ENCODE measurements at regions of chr12 and their contacts with region 1.

Region 1: GRCh38 chr12:78392918-78393317 is 471.7 kb upstream of the SYT1 start:
- H3K4me3 Mint-ChIP-seq: no peak overlapping the region
- H3K27ac Mint-ChIP-seq: no peak overlapping the region
- H3K4me1 Mint-ChIP-seq: peaks cover 6% of the 10 kb centered on the region
- H3K27me3 Mint-ChIP-seq: no peaks in the 10 kb centered on the region

Region 2: DNA sequence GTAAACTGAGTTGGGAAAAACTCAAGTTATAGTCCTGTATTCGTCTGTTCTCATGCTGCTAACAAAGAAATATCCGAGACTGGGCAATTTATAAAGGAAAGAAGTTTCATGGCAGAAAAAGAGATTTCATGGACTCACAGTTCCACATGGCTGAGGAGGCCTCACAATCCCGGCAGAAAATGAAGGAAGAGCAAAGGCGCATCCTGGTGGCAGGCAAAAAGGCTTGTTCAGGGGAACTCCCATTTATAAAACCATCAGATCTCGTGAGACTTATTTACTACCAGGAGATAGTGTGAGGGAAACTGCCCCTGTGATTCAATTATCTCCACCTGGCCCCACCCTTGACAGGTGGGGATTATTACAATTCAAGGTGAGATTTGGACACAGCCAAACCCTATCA is 179.0 kb after region 1 on chr12:
- intact Hi-C with region 1: loop called (anchors 5 kb)
- H3K4me3 Mint-ChIP-seq: no peak overlapping the region
- H3K27ac Mint-ChIP-seq: no peak overlapping the region
- H3K4me1 Mint-ChIP-seq: no peaks in the 10 kb centered on the region
- H3K27me3 Mint-ChIP-seq: no peaks in the 10 kb centered on the region

Region 3: GRCh38 chr12:79174626-79175025 is 781.7 kb after region 1 on chr12:
- intact Hi-C with region 1: loop called (anchors 2 kb)
- H3K4me3 Mint-ChIP-seq: no peak overlapping the region
- H3K27ac Mint-ChIP-seq: no peak overlapping the region
- H3K4me1 Mint-ChIP-seq: no peaks in the 10 kb centered on the region
- H3K27me3 Mint-ChIP-seq: no peaks in the 10 kb centered on the region